ENCODE measurements at regions of chr11 and their contacts with region 1.

Region 1: GRCh38 chr11:119057000-119057769 is at the start of gene HYOU1:
- DNase-seq: peak; percentile 99
- H3K4me3 ChIP-seq: peak within 1 kb of the TSS; percentile 82
- H3K27ac ChIP-seq: peak within 1 kb of the TSS; percentile 65
- H3K4me1 ChIP-seq: peaks cover 13% of the 10 kb centered on the region
- CTCF ChIP-seq: peak; percentile 50; the same call in 1 of the 2 replicates
- total RNA-seq, gene HYOU1: 86.6 and 97.6 TPM in 2 replicates

Region 2: GRCh38 chr11:118939953-118940598 is 117.1 kb before region 1 on chr11:
- CTCF ChIA-PET with region 1: no interaction called
- POLR2A ChIA-PET with region 1: no interaction called
- intact Hi-C with region 1: no loop called
- DNase-seq: peak; percentile 61
- H3K4me3 ChIP-seq: no peak overlapping the region
- H3K27ac ChIP-seq: no peak overlapping the region
- H3K4me1 ChIP-seq: peaks cover 28% of the 10 kb centered on the region
- CTCF ChIP-seq: no peak

Region 3: GRCh38 chr11:119018074-119018938 is 38.9 kb before region 1 on chr11 and contains the starts of genes RPS25 and TRAPPC4:
- CTCF ChIA-PET with region 1: no interaction called
- POLR2A ChIA-PET with region 1: interaction called, 5 read pairs
- intact Hi-C with region 1: loop called (anchors 1 kb)
- DNase-seq: peak; percentile 97
- H3K4me3 ChIP-seq: peak within 1 kb of the TSS; percentile 81
- H3K27ac ChIP-seq: peak within 1 kb of the TSS; percentile 90
- H3K4me1 ChIP-seq: peaks cover 29% of the 10 kb centered on the region
- CTCF ChIP-seq: no peak
- total RNA-seq, gene RPS25: 1,395 and 1,541 TPM in 2 replicates
- total RNA-seq, gene TRAPPC4: 49.3 and 64.3 TPM in 2 replicates

Region 4: GRCh38 chr11:119030329-119031049 is 26.7 kb before region 1 on chr11 and contains the start of gene SLC37A4:
- CTCF ChIA-PET with region 1: no interaction called
- POLR2A ChIA-PET with region 1: interaction called, 4 read pairs
- intact Hi-C with region 1: loop called (anchors 1 kb)
- DNase-seq: peak; percentile 99
- H3K4me3 ChIP-seq: peak within 1 kb of the TSS; percentile 80
- H3K27ac ChIP-seq: peak within 1 kb of the TSS; percentile 4
- H3K4me1 ChIP-seq: peaks cover 21% of the 10 kb centered on the region
- CTCF ChIP-seq: no peak
- total RNA-seq, gene SLC37A4: 14.5 and 14.8 TPM in 2 replicates